Cardiac septum (tissue), 1 donor: ENCODE measurements at regions of chr17 and their contacts with region 1.

Region 1: GRCh38 chr17:50318501-50319285 is 27.2 kb upstream of the XYLT2 start:
- DNase-seq: no peak

Region 2: DNA sequence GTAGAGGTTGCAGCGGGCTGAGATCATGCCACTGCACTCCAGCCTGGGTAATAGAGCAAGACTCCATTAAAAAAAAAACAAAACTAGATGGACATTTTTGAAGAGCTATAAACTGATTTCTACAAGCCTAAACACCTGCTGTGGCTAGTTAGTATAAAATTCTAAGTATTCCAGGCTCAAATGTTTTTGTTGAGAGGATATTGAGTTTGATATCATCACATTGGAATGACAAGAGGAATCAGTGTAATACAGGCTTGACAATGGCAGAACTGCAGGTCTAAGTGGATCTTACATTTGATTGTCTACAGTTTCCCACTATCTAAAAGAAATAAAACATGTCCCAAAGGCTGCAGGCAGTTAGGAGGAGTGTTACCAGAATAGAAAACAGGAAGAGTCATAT is 299.8 kb before region 1 on chr17:
- intact Hi-C with region 1: loop called (anchors 10 kb)
- DNase-seq: no peak

Region 3: GRCh38 chr17:50372758-50373556 is 54.3 kb after region 1 on chr17 and contains the starts of genes EME1 and MRPL27:
- intact Hi-C with region 1: no loop called
- DNase-seq: peak; percentile 93
- total RNA-seq, gene EME1: 0.35 TPM
- total RNA-seq, gene MRPL27: 61.4 TPM